Esophagus muscularis mucosa (tissue), 4 donors: ENCODE measurements at regions of chr12 and their contacts with region 1.

Region 1: GRCh38 chr12:12645485-12645884 is 33.8 kb downstream of the CREBL2 start:
- DNase-seq: no peak
- H3K4me3 ChIP-seq: no peak overlapping the region
- H3K27ac ChIP-seq: no peak overlapping the region
- H3K4me1 ChIP-seq: no peaks in the 10 kb centered on the region
- H3K27me3 ChIP-seq: no peaks in the 10 kb centered on the region
- CTCF ChIP-seq: peak; percentile 43 to 58 (median 47)
- EP300 ChIP-seq: no peak
- POLR2A ChIP-seq: no peak

Region 2: DNA sequence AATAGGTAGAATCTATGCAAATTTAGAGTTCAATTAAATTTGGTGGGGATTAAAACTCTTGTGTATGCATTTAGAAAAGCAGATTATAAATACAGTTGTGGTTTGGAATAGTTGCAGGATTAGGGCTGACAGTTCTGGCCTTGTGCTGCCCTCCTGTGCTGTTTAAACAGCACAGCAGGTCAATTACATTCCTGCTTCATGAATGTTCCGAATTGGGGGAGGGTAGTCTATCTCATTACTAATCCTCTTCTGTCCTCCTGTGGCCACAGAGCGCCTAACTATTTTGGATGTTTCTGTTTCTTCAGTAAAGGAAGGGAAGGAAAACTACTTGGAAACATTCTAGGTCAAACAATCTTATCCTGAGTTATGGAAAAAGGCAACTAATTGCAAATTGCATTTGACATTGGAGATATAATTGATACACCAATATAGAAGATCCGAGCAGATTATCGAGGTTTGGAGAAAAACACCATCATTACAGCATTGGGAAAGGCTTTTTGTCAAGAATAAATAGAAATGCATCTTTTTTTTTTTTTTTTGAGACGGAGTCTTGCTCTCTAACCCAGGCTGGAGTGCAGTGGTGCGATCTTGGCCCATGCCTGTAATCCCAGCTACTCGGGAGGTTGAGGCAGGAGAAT is 59.2 kb after region 1 on chr12:
- intact Hi-C with region 1: loop called (anchors 5 kb)
- DNase-seq: no peak
- H3K4me3 ChIP-seq: no peak overlapping the region
- H3K27ac ChIP-seq: no peak overlapping the region
- H3K4me1 ChIP-seq: peaks cover 0 to 12% (median 8%) of the 10 kb centered on the region in 4 donors
- H3K27me3 ChIP-seq: no peaks in the 10 kb centered on the region
- CTCF ChIP-seq: peak; percentile 85 to 99 (median 91)
- EP300 ChIP-seq: no peak
- POLR2A ChIP-seq: no peak